ENCODE measurements at regions of chr16 and their contacts with region 1.

Region 1: DNA sequence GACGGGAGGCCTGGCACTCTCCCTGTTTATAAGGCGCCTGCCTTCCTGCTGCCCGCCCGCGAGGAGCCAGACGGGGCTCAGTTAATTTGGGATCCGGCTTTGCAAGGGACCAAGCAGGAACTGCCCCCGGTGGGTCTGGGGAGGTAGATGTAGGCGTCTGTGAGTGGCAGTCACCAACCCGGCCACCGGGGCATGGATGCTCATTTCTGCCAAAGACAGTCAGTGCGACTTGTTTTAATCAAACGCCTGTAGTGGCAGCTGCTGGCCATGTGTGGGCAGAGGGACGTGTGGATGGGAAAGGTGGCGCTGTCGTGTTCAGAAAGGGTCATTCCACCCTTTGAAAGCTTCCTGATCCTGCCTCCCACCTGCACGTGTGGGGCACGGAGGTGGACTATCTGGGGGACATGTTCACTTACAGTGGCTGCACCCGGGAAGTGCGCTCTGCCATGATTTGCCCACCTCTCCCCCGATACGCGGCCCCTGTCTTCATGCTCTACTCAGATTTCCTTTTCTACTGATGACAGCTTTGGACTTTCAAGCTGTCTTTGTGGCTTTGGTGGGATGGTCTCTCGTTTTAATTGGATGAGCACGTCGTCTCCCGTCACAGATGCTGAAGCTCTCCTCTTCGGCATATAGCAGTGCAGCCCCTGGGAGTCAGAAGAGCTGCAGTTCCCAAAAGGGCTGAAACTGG is 60.3 kb upstream of the CIBAR2 start:
- DNase-seq: peak in 1 of 2 donors; percentile 81
- ATAC-seq: peak; percentile 45 to 67 (median 52)
- H3K4me3 ChIP-seq: peak overlapping the region; percentile 77
- H3K27ac ChIP-seq: peak overlapping the region; percentile 79
- H3K4me1 ChIP-seq: peaks cover 68% of the 10 kb centered on the region
- H3K27me3 ChIP-seq: no peaks in the 10 kb centered on the region
- CTCF ChIP-seq: peak; percentile 46

Region 2: DNA sequence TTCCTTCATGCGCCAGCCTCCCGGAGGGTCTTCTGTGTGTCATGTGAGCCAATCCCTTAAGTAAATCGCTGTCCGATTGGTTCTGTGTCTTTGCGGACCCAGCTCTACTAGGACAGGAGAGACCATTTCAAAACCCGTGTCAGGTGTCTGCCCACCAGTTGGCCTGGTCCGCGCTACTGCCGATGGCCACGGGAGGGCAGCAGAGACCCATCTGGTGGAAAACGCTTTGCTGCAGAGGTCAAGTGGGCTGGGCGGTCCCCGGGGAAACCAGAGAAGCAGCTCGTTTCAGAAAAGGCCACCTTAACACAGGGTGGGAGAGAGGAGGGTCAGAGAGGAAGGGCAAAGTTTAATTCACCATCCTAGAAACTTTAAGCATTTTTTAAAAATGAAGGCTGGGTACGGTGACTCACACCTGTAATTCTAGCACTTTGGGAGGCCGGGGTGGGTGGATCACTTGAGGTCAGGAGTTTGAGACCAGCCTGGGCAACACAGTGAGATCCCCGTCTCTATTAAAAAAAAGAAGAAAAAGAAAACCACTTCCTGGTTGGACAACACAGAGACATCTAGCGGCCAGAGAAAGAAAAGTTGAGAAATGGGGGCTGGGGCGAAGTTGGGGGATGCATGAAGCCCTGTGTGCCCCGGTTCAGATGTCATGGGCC is 57.6 kb before region 1 on chr16:
- intact Hi-C with region 1: loop called (anchors 2 to 5 kb)
- DNase-seq: peak; percentile 90 to 95
- ATAC-seq: peak; percentile 92 to 97 (median 96)
- H3K4me3 ChIP-seq: peak overlapping the region; percentile 25
- H3K27ac ChIP-seq: peak overlapping the region; percentile 50
- H3K4me1 ChIP-seq: peaks cover 8% of the 10 kb centered on the region
- H3K27me3 ChIP-seq: no peaks in the 10 kb centered on the region
- CTCF ChIP-seq: peak; percentile 98

Region 3: DNA sequence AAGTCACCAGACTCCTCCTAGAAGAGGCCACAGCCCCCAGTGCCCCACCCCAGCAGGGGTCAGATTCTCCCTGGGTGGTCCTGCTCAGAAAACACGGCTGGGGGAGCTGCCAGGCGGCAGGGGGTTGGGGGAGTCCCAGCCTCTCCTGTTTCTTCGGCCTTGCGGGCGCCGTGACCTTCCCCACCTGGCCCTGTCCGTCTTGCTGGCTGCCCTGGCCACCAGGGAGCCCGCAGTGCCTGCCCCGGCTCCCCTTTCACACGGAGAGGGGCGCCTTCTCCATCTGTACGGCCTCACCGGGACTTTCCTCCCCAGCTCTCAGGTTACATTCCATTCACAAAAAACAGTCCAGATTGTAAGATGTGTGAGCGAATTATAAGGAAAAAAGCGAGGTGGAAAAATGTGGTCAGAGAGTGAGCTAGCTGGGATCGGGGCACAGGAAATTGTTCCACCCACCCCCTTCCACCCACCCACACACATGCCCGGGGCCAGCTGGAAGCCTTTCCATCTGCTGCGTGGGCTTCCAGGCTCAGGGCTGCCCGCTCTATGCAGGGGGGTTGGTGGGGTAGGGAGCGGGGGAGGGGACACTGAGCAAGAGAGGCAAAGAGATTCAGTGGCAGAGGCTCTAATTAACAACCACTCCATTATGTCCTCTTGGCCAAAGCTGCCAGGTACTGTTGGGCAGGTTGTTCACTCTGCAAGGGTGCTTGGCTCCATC is 45.7 kb before region 1 on chr16:
- intact Hi-C with region 1: loop called in 1 of 2 experiments (anchors 2 kb)
- DNase-seq: peak; percentile 80 to 91
- ATAC-seq: peak; percentile 74 to 87 (median 80)
- H3K4me3 ChIP-seq: peak overlapping the region; percentile 33
- H3K27ac ChIP-seq: peak overlapping the region; percentile 93
- H3K4me1 ChIP-seq: peaks cover 53% of the 10 kb centered on the region
- H3K27me3 ChIP-seq: no peaks in the 10 kb centered on the region
- CTCF ChIP-seq: no peak

Region 4: GRCh38 chr16:85210423-85211169 is 38.0 kb after region 1 on chr16:
- intact Hi-C with region 1: loop called (anchors 5 kb)
- DNase-seq: no peak
- ATAC-seq: peak in 3 of 4 donors; percentile 24 to 47 (median 29)
- H3K4me3 ChIP-seq: no peak overlapping the region
- H3K27ac ChIP-seq: peak overlapping the region; percentile 23
- H3K4me1 ChIP-seq: peaks cover 84% of the 10 kb centered on the region
- H3K27me3 ChIP-seq: no peaks in the 10 kb centered on the region
- CTCF ChIP-seq: no peak

Region 5: GRCh38 chr16:85253084-85253941 is 80.7 kb after region 1 on chr16:
- intact Hi-C with region 1: no loop called
- DNase-seq: peak; percentile 61 to 71
- ATAC-seq: peak; percentile 62 to 77 (median 66)
- H3K4me3 ChIP-seq: no peak overlapping the region
- H3K27ac ChIP-seq: no peak overlapping the region
- H3K4me1 ChIP-seq: peaks cover 10% of the 10 kb centered on the region
- H3K27me3 ChIP-seq: no peaks in the 10 kb centered on the region
- CTCF ChIP-seq: peak; percentile 79

Measured in psoas muscle (tissue), 8 donors.